ENCODE measurements at regions of chr4 and their contacts with region 1.

Region 1: DNA sequence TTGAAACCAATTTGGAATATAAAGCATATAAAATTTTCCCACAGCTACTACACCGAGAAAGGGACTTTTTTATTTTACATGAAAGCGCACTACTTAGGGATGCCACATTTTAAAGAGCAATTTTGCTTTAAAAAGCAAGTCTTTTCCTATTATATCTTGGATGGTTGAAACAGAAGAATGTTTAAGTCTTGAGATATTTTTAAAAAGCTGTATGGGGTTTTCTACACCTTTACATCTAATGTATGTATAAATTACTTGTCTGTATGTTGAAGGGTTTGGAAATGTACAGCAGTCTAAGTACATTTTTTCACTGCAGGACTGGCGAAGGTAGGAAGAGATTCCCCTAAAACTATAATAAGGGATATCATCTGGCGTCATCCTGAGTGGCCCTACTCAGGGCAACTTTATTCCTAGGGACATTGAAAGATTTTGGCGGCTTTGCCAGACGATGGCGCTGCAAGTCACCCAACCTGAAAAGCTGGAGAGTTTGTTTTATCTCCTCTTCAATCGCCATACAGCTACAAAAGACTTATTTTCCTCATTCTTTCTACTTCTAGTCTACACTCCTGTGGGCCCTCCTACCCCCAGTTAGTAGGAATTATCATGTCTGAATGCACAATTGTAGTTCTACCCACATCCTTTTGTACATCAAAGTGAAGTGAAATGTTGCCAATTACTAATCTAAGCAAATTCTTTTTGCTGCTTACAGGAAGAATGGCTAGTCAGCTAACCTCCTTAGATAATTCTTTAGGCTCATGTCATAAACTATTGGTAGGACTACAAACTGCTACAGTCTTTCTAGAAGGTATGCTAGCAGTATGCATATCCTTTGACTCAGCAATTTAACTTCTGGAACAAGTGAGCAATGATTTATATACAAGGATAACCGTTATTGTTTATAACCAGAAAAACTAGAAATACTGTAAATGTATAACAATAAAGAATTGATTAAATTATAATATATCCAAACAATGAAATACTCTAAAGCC is 782 bp upstream of the NEK1 start:
- DNase-seq: peak; percentile 87
- H3K4me3 ChIP-seq: peak overlapping the region; percentile 68 to 88 (median 84)
- H3K27ac ChIP-seq: peak overlapping the region; percentile 90 to 96 (median 94)
- H3K4me1 ChIP-seq: peaks cover 0 to 24% (median 19%) of the 10 kb centered on the region in 4 donors
- H3K27me3 ChIP-seq: no peaks in the 10 kb centered on the region
- CTCF ChIP-seq: peak in 3 of 4 experiments; percentile 15 to 67 (median 57)
- EP300 ChIP-seq: no peak
- POLR2A ChIP-seq: no peak

Region 2: DNA sequence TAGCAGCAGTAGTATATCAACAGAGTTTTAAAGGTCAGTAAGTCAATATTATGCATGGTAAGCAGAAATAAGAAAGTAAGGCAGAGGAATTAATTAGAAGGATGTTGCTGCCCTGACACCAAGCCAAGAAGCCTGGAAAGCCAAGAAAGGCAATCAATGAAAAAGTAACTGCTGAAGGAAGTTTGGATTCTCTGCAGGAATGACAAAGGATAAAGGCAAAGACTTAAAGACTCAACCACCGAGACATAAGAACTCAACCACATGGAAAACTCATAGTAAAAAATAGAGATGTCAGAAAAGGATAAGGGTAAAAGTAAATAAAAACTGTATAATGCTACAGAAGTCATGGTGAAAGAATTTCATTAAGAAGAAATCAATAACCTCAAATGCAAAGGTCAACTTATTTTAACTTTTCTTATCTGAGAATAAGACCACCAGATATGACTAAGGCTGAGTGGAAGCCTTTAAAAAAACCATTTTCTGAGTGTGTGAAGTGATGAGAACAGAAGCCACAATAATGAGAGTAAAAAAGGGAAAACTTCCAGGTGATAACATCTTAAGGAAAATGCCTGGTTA is 56.0 kb before region 1 on chr4:
- intact Hi-C with region 1: no loop called
- DNase-seq: no peak
- H3K4me3 ChIP-seq: no peak overlapping the region
- H3K27ac ChIP-seq: no peak overlapping the region
- H3K4me1 ChIP-seq: peaks cover 0 to 6% (median 0%) of the 10 kb centered on the region in 4 donors
- H3K27me3 ChIP-seq: no peaks in the 10 kb centered on the region
- CTCF ChIP-seq: no peak
- EP300 ChIP-seq: no peak
- POLR2A ChIP-seq: no peak

Region 3: GRCh38 chr4:169659716-169660670 is 46.8 kb after region 1 on chr4:
- intact Hi-C with region 1: loop called (anchors 2 kb)
- DNase-seq: peak; percentile 90
- H3K4me3 ChIP-seq: peak overlapping the region; percentile 35 to 57 (median 45)
- H3K27ac ChIP-seq: peak overlapping the region; percentile 66 to 89 (median 80)
- H3K4me1 ChIP-seq: peaks cover 0 to 56% (median 24%) of the 10 kb centered on the region in 4 donors
- H3K27me3 ChIP-seq: no peaks in the 10 kb centered on the region
- CTCF ChIP-seq: no peak
- EP300 ChIP-seq: no peak
- POLR2A ChIP-seq: peak in 1 of 2 donors; percentile 21

Region 4: GRCh38 chr4:169707958-169708643 is 94.9 kb after region 1 on chr4:
- intact Hi-C with region 1: loop called (anchors 5 kb)
- DNase-seq: no peak
- H3K4me3 ChIP-seq: no peak overlapping the region
- H3K27ac ChIP-seq: peak overlapping the region in 2 of 4 donors; percentile 2 to 40
- H3K4me1 ChIP-seq: no peaks in the 10 kb centered on the region
- H3K27me3 ChIP-seq: no peaks in the 10 kb centered on the region
- CTCF ChIP-seq: no peak
- EP300 ChIP-seq: no peak
- POLR2A ChIP-seq: no peak

Region 5: DNA sequence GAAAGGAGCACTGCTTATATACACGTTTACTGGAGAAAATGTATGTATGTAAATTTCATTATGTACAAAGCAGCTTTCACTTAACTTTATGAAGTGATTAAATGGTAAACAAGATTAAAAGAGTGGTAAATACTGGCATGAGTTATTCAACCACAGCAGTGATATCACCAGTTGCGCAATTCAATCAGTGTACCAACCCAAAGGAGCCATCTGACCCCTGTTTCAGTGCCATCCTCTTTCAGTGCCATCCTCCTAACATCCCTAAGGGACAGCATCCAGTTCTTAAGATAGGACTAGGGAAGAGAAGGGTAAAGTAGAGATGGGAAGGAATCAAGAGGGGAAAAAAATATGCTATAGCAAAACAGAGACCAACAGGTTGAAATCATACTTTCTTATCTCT is 128.4 kb after region 1 on chr4:
- intact Hi-C with region 1: no loop called
- DNase-seq: no peak
- H3K4me3 ChIP-seq: no peak overlapping the region
- H3K27ac ChIP-seq: no peak overlapping the region
- H3K4me1 ChIP-seq: no peaks in the 10 kb centered on the region
- H3K27me3 ChIP-seq: no peaks in the 10 kb centered on the region
- CTCF ChIP-seq: no peak
- EP300 ChIP-seq: no peak
- POLR2A ChIP-seq: no peak

Region 6: GRCh38 chr4:169757575-169758184 is 144.5 kb after region 1 on chr4 and contains the start of gene HPF1:
- intact Hi-C with region 1: loop called (anchors 2 kb)
- DNase-seq: peak; percentile 96
- H3K4me3 ChIP-seq: peak within 1 kb of the TSS; percentile 57 to 81 (median 80)
- H3K27ac ChIP-seq: peak within 1 kb of the TSS; percentile 75 to 80 (median 78)
- H3K4me1 ChIP-seq: peaks cover 0 to 18% (median 14%) of the 10 kb centered on the region in 4 donors
- H3K27me3 ChIP-seq: no peaks in the 10 kb centered on the region
- CTCF ChIP-seq: no peak
- EP300 ChIP-seq: peak in 2 of 4 donors; percentile 3 to 64
- POLR2A ChIP-seq: no peak
- total RNA-seq, gene HPF1: 22.7 to 70.3 (median 52.0) TPM

Region 7: DNA sequence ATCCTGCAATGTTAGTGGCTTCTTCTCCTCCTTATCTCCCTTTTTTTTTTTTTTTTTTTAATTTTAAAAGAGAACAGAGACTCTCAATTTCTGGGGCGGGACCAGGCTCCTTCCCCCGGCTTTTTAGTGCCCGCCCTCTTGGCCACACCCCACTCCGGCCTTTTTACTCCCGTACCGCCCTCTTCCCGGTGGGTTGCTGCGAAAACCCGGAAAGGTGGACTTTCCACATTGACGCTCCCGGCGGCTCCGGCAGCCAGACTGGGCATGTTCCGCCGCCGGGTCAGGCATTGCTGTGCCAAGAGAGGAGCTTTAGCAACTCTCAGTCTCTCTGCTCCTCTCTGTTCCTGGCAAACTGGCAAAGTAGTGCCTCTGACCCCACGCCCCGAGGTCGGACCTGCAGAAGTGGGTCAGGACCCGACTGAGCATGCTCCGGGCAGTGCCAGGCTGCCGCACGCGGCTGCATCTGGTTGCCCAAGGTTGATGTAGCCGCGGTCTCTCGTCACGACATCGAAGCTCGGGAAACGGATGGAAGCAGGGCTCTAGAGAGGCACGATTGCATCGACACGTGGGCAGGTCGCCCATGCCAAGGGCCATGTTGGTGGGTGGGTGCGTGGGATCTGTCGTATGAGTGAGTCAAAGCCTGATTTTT is 414.1 kb after region 1 on chr4:
- intact Hi-C with region 1: loop called (anchors 5 kb)
- DNase-seq: peak; percentile 97
- H3K4me3 ChIP-seq: peak overlapping the region; percentile 63 to 88 (median 80)
- H3K27ac ChIP-seq: peak overlapping the region; percentile 91 to 93 (median 93)
- H3K4me1 ChIP-seq: peaks cover 4 to 11% (median 9%) of the 10 kb centered on the region in 4 donors
- H3K27me3 ChIP-seq: no peaks in the 10 kb centered on the region
- CTCF ChIP-seq: no peak
- EP300 ChIP-seq: peak in 1 of 4 donors; percentile 7
- POLR2A ChIP-seq: no peak

Region 8: GRCh38 chr4:170047771-170048354 is 434.7 kb after region 1 on chr4:
- intact Hi-C with region 1: loop called (anchors 5 kb)
- DNase-seq: no peak
- H3K4me3 ChIP-seq: no peak overlapping the region
- H3K27ac ChIP-seq: no peak overlapping the region
- H3K4me1 ChIP-seq: no peaks in the 10 kb centered on the region
- H3K27me3 ChIP-seq: no peaks in the 10 kb centered on the region
- CTCF ChIP-seq: peak; percentile 42 to 71 (median 65)
- EP300 ChIP-seq: no peak
- POLR2A ChIP-seq: no peak